Left colon (tissue), 2 donors: ENCODE measurements at regions of chr6 and their contacts with region 1.

Region 1: GRCh38 chr6:136792410-136793262 is at the start of gene MAP3K5:
- DNase-seq: peak; percentile 89 to 97
- ATAC-seq: peak; percentile 85
- total RNA-seq, gene MAP3K5: 17.5 to 18.9 TPM

Region 2: DNA sequence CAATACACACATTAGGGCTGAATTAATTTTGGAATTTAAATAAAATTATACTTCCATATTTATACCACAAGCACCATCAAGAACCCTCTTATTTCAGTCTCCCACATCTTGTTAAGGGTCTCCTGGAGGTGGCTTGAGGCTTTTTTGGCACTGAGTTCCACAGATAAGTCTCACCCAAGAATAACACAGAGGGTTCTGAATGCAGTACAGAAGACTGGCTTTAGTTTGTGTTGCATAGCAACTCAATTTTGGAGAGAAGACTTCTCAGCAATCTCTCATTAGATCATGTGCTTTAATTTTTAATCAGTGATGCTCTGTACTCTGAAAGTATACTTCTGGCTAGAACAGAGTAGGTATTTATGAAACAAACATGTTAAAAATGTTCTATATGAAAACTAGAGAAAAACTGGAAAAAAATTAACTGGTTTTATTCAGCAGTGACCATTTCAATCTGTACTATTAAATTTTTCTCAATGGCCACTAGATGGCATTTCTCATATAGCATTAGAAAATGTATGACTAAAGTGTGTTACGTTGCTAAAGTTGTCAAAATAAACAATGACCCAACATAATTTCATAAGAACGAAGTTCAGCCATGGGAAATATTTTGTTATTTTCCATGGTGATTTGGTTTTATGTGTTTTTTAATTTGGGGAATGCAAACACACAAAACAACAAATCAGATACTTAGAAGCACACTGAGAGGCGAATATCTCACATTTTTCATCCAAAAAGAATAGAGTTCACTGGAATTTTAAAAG is 209.7 kb before region 1 on chr6:
- intact Hi-C with region 1: loop called in 1 of 2 experiments (anchors 10 kb)
- DNase-seq: no peak
- ATAC-seq: peak; percentile 51

Region 3: DNA sequence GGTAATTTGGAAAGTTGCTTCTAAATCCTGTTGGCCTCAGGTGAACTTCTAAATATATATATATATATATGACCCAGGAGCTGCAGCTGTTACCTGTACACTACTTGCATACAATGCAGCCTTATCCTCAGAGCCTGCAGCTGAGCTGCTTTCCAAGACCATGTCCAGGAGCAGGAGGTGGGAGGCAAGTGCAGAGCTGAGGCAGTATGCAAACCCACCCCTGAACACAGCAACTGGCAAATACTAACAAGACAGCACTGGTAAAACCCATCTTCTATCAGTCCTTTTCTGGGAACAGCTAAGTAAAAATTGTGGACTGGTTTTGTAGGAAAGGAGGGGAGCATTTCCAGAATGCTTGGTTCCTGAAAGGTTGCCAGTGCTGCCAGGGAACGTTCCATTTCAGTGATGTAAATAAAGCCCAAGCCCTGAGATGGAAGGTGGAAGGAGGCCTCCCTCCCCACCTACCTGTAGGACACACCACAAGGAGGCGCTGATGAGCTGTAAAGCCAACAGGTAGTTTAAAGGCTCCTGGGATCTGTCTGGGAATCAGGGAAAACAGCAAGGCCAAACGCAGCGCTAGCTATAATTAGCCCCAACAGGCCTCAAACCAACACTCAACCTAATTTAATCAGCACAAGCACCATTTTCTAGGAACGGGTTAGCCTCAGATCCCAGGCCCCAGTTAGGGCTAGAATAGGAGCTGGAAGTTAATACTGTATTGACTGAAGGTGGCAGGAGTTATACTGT is 148.6 kb before region 1 on chr6:
- intact Hi-C with region 1: loop called (anchors 2 to 10 kb)
- DNase-seq: peak; percentile 85 to 98
- ATAC-seq: peak; percentile 98